HepG2 (cell line): ENCODE measurements at regions of chr16 and their contacts with region 1.

Region 1: DNA sequence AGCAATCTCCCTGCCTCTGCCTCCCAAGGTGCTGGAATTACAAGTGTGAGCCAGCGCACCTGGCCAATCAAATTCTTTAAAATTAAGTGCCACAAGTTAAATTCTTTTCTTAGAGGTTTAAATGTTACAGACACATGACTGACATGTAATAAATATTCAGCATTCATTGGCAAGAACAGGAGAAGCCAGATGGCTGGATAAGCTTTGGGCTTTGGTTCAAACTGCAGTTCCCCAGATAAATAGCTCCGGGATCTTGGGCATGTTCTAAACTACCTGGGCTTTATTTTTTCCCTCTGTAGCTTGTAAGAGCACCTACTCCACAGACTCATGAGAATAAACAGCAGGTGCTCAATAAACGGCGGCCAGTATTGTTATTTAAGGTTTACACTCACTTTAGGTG is 34.1 kb downstream of the ABAT start:
- DNase-seq: no peak
- ATAC-seq: no peak
- H3K4me3 ChIP-seq: no peak overlapping the region
- H3K27ac ChIP-seq: no peak overlapping the region
- H3K4me1 ChIP-seq: peaks cover 8% of the 10 kb centered on the region; the same call in 1 of the 2 replicates
- H3K27me3 ChIP-seq: no peaks in the 10 kb centered on the region
- CTCF ChIP-seq: no peak
- EP300 ChIP-seq: no peak
- POLR2A ChIP-seq: no peak
- RAD21 ChIP-seq: no peak

Region 2: GRCh38 chr16:8094696-8095095 is 613.8 kb before region 1 on chr16:
- CTCF ChIA-PET with region 1: no interaction called
- POLR2A ChIA-PET with region 1: no interaction called
- in situ Hi-C with region 1: no loop called
- intact Hi-C with region 1: loop called (anchors 5 kb)
- DNase-seq: no peak
- ATAC-seq: no peak
- H3K4me3 ChIP-seq: no peak overlapping the region
- H3K27ac ChIP-seq: no peak overlapping the region
- H3K4me1 ChIP-seq: no peaks in the 10 kb centered on the region
- H3K27me3 ChIP-seq: no peaks in the 10 kb centered on the region
- CTCF ChIP-seq: no peak
- EP300 ChIP-seq: no peak
- POLR2A ChIP-seq: no peak
- RAD21 ChIP-seq: no peak